Heart right ventricle (tissue), 16 donors: ENCODE measurements at regions of chr17 and their contacts with region 1.

Region 1: DNA sequence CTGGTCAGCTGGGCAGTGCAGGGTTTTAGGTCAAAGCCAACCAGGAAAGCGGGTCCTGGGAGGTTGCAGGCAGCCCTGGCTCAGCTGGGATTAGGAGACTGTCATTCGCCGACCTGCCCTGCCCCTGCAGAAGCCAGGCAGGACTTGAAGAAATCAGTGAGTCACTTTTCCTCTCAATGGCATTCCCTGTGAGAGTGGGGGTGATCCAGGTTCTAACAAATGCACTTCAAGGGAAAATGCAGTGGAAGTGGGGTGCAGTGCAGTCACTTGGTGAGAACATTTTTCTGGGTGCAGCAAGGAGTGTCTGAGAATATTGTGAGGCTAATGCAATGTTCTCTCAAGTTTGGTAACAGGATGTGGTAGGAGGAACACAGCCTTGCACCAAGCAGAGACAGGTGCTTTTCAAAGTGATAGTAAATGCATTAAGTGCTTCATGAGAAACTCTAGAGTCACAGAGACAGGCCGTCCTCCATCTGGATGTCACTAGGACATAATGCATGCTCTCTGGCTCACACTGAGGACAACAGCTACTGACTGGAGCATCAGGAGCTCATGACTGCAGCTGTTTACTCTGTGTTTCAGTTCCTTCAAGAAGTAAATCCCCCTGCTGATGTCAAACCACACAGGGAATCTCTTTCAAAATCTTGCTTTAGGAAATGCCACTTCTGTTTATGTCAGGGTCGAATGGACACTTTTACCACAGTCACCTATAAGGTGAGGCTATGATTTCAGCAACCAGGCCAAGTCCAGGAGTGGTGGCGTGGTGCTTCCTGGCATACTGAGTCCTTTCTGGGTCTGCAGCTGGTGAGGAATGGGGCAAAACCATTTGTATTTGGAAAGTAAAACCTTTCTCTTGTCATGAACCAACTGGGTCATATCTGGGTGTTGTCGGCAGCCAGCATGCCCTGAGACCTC is 16.7 kb downstream of the CDK5R1 start:
- DNase-seq: no peak
- ATAC-seq: peak in 4 of 8 donors; percentile 34 to 64 (median 38)
- H3K4me3 ChIP-seq: no peak overlapping the region
- H3K27ac ChIP-seq: peak overlapping the region in 2 of 10 donors; percentile 4 to 79
- H3K4me1 ChIP-seq: peaks cover 0 to 27% (median 0%) of the 10 kb centered on the region in 9 donors
- H3K27me3 ChIP-seq: no peaks in the 10 kb centered on the region
- CTCF ChIP-seq: no peak

Region 2: DNA sequence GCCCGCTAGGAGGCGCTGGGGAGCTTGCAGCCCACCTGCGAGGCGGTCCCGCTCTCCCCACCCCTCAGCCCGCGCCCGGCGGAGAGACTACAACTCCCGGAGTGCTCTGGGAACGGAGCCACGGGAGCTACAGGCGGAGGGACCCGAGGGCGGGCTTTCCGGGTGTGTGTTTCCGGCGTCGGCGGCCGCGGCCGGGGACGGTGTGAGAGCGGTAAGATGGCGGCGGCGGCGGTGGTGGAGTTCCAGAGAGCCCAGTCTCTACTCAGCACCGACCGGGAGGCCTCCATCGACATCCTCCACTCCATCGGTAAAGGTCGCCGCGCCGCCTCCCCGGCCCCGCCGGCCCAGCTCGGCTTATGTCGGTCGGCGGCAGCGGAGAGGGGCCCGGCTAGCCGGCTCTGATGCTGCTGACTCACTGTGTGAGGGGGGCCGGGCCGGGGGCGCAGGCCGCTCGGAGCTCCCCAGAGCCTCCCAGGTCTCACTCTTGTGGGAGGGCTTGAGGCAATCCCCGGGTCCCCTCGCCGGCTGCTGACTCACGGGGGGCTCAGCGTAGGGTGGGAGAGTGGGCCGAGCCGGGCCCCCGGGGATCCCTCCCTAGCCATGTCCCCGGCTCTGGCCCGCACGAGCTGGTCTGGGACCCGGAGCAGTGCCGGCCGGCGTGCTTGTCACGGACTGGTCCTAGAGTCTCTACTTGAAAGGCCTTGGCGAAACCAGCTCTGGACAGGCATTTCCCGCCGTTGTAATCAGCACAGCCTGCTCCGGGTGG is 59.0 kb before region 1 on chr17 and contains the start of gene PSMD11:
- intact Hi-C with region 1: no loop called
- DNase-seq: peak; percentile 98
- ATAC-seq: peak; percentile 98 to 99 (median 98)
- H3K4me3 ChIP-seq: peak within 1 kb of the TSS; percentile 71 to 100 (median 93)
- H3K27ac ChIP-seq: peak within 1 kb of the TSS; percentile 69 to 95 (median 90)
- H3K4me1 ChIP-seq: peaks cover 2 to 34% (median 28%) of the 10 kb centered on the region in 9 donors
- H3K27me3 ChIP-seq: no peaks in the 10 kb centered on the region
- CTCF ChIP-seq: peak in 3 of 9 donors; percentile 87 to 97 (median 95)
- total RNA-seq, gene PSMD11: 74.9 to 102 (median 84.1) TPM

Region 3: GRCh38 chr17:32609085-32609484 is 105.6 kb after region 1 on chr17:
- intact Hi-C with region 1: loop called in 3 of 10 experiments (anchors 10 kb)
- DNase-seq: peak; percentile 34 to 57
- ATAC-seq: peak; percentile 34 to 86 (median 66)
- H3K4me3 ChIP-seq: no peak overlapping the region
- H3K27ac ChIP-seq: no peak overlapping the region
- H3K4me1 ChIP-seq: peaks cover 0 to 5% (median 0%) of the 10 kb centered on the region in 9 donors
- H3K27me3 ChIP-seq: no peaks in the 10 kb centered on the region
- CTCF ChIP-seq: peak in 7 of 9 donors; percentile 21 to 56 (median 51)

Region 4: GRCh38 chr17:32854207-32854606 is 350.7 kb after region 1 on chr17:
- intact Hi-C with region 1: no loop called
- DNase-seq: no peak
- ATAC-seq: no peak
- H3K4me3 ChIP-seq: no peak overlapping the region
- H3K27ac ChIP-seq: no peak overlapping the region
- H3K4me1 ChIP-seq: peaks cover 0 to 9% (median 0%) of the 10 kb centered on the region in 9 donors
- H3K27me3 ChIP-seq: no peaks in the 10 kb centered on the region
- CTCF ChIP-seq: no peak